Activated CD8-positive, alpha-beta T cell treated with anti-CD3 and anti-CD28 coated beads for 36 hours (primary cell): ENCODE measurements at regions of chr3 and their contacts with region 1.

Region 1: GRCh38 chr3:14921078-14921616 is 26.2 kb upstream of the NR2C2 start:
- DNase-seq: peak; percentile 88
- ATAC-seq: peak; percentile 99
- H3K4me3 Mint-ChIP-seq: no peak overlapping the region
- H3K27ac Mint-ChIP-seq: no peak overlapping the region
- H3K4me1 Mint-ChIP-seq: no peaks in the 10 kb centered on the region
- H3K27me3 Mint-ChIP-seq: no peaks in the 10 kb centered on the region
- CTCF ChIP-seq: peak; percentile 96

Region 2: GRCh38 chr3:14633819-14634424 is 287.2 kb before region 1 on chr3:
- CTCF ChIA-PET with region 1: interaction called, 19 read pairs
- POLR2A ChIA-PET with region 1: no interaction called
- intact Hi-C with region 1: loop called (anchors 5 kb)
- DNase-seq: peak; percentile 71
- ATAC-seq: peak; percentile 86
- H3K4me3 Mint-ChIP-seq: no peak overlapping the region
- H3K27ac Mint-ChIP-seq: no peak overlapping the region
- H3K4me1 Mint-ChIP-seq: no peaks in the 10 kb centered on the region
- H3K27me3 Mint-ChIP-seq: peaks cover 29% of the 10 kb centered on the region
- CTCF ChIP-seq: peak; percentile 79

Region 3: DNA sequence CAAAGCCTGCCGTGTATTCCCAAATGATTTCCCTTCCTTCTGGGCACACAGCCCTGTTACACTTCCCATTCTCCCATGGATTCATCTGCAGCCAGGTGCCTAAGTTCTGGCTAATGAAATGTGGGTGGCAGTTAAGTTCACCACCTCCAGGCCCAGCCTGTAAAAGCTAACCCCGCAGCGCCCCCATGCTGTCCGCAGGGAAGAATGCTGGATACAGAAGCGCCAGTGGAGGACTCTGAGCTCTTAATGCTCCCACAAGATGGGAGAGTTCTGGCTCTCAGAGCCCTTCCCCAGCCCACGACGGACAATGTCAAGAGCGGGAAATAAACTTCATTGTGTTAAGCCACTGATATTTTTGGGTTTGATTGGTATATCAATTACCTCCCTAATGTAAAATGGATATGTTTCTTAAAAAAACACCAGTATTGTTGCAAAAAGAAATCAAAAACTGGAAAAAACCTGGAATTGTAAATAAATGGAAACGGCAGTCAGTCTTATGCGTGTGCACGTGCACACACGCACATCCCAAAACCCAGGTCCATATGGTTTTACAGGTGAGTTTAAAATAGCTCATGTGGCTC is 140.1 kb before region 1 on chr3:
- CTCF ChIA-PET with region 1: interaction called, 11 read pairs
- POLR2A ChIA-PET with region 1: no interaction called
- intact Hi-C with region 1: no loop called
- DNase-seq: peak; percentile 66
- ATAC-seq: no peak
- H3K4me3 Mint-ChIP-seq: no peak overlapping the region
- H3K27ac Mint-ChIP-seq: no peak overlapping the region
- H3K4me1 Mint-ChIP-seq: no peaks in the 10 kb centered on the region
- H3K27me3 Mint-ChIP-seq: peaks cover 2% of the 10 kb centered on the region
- CTCF ChIP-seq: peak; percentile 69

Region 4: DNA sequence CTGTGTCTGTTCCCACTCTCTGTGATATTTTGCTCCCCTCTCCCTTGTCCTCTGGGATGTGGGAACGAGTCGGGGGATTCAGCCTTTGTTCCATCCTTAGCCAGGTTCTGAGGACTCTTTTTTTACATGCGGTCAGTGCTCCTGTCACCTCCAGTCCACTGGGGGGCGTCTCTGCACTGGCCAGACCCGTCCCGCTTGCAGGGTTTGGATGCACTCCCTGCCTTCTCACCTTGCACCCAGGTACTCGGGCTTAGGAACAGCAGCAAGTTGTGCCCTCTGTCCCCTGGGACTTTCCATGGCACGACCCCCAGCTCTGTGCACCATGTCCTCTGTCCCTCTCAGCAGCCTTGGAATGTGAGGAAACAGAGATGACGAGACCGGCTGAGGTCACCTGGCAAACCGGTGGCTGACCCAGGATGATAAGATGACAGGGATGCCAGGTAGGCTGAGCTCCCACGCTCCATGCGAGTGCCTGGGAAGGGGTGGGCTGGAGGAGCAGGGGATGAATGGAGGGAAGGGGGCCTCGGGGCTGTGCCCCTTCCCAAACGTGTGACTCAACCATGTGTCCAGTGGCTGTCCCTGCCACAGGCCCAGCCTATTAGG is 129.7 kb before region 1 on chr3:
- CTCF ChIA-PET with region 1: interaction called, 53 read pairs
- POLR2A ChIA-PET with region 1: no interaction called
- intact Hi-C with region 1: loop called (anchors 2 kb)
- DNase-seq: peak; percentile 76
- ATAC-seq: peak; percentile 84
- H3K4me3 Mint-ChIP-seq: no peak overlapping the region
- H3K27ac Mint-ChIP-seq: no peak overlapping the region
- H3K4me1 Mint-ChIP-seq: no peaks in the 10 kb centered on the region
- H3K27me3 Mint-ChIP-seq: peaks cover 15% of the 10 kb centered on the region
- CTCF ChIP-seq: peak; percentile 67

Region 5: DNA sequence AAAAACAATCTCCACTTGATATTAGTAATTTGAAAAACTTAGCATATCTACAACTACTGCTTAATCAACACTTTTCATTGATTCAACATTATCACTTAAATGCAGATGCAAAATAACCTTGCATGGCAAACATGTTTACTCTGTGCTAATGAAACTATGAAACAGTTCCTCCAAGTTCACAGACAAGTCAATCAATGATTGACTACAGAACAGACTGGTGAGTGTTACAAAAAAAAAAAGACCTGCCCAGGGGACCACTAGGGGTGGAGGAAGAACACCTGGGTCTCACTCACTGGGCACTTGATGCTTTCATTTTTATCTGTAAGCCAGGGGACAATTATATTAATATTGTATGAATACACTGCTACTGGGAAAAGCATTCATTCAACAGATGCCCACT is 21.9 kb after region 1 on chr3:
- CTCF ChIA-PET with region 1: interaction called, 12 read pairs
- POLR2A ChIA-PET with region 1: no interaction called
- intact Hi-C with region 1: no loop called
- DNase-seq: no peak
- ATAC-seq: no peak
- H3K4me3 Mint-ChIP-seq: no peak overlapping the region
- H3K27ac Mint-ChIP-seq: no peak overlapping the region
- H3K4me1 Mint-ChIP-seq: peaks cover 23% of the 10 kb centered on the region
- H3K27me3 Mint-ChIP-seq: no peaks in the 10 kb centered on the region
- CTCF ChIP-seq: no peak

Region 6: DNA sequence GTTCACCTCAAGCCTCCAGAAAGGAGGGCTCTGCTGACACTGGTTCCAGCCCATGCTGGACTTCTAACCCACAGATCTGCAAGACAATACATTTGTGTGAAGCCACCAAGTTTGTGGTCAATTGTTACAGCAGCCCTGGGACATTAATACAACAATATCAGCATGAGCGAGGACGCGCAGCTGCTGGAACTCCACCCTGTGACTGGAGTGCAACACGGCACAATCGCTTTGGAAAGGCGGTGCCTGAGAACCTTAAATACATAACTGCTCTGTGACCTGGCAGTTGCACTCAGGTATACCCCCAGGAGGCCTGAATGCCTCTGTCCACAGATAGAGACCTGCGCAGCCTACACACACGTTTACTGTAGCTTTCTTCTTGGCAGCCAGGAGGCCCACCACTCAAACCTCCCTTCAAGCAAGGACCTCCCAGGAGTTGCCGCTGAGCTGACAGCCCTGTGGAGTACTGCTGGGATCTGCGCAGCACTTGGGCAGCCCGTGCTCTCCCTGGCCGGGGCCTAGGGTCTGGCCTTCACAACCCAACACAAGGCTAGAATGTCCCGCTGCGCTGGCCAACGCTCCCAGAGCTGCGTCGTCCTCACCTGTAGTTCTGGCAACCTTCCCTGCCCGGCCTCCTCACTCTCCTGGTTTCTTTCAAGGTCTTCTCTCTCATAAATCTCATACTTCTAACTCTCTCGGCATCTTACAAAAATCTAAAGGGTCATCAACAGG is 135.7 kb after region 1 on chr3:
- CTCF ChIA-PET with region 1: no interaction called
- POLR2A ChIA-PET with region 1: no interaction called
- intact Hi-C with region 1: no loop called
- DNase-seq: no peak
- ATAC-seq: no peak
- H3K4me3 Mint-ChIP-seq: no peak overlapping the region
- H3K27ac Mint-ChIP-seq: peak overlapping the region; percentile 60
- H3K4me1 Mint-ChIP-seq: peaks cover 56% of the 10 kb centered on the region
- H3K27me3 Mint-ChIP-seq: no peaks in the 10 kb centered on the region
- CTCF ChIP-seq: no peak